Mammary epithelial cell (primary cell): ENCODE measurements at regions of chr19 and their contacts with region 1.

Region 1: GRCh38 chr19:46967578-46968027 is 52.0 kb upstream of the NPAS1 start:
- DNase-seq: no peak
- H3K4me3 ChIP-seq: no peak overlapping the region
- H3K27ac ChIP-seq: no peak overlapping the region
- H3K4me1 ChIP-seq: peaks cover 10% of the 10 kb centered on the region
- H3K27me3 ChIP-seq: no peaks in the 10 kb centered on the region
- CTCF ChIP-seq: no peak

Region 2: GRCh38 chr19:46890423-46891170 is 77.0 kb before region 1 on chr19:
- CTCF ChIA-PET with region 1: no interaction called
- dilution Hi-C with region 1: loop called (anchors 5 kb)
- in situ Hi-C with region 1: no loop called
- intact Hi-C with region 1: no loop called
- DNase-seq: peak; percentile 60
- H3K4me3 ChIP-seq: no peak overlapping the region
- H3K27ac ChIP-seq: no peak overlapping the region
- H3K4me1 ChIP-seq: peaks cover 15% of the 10 kb centered on the region
- H3K27me3 ChIP-seq: no peaks in the 10 kb centered on the region
- CTCF ChIP-seq: no peak

Region 3: DNA sequence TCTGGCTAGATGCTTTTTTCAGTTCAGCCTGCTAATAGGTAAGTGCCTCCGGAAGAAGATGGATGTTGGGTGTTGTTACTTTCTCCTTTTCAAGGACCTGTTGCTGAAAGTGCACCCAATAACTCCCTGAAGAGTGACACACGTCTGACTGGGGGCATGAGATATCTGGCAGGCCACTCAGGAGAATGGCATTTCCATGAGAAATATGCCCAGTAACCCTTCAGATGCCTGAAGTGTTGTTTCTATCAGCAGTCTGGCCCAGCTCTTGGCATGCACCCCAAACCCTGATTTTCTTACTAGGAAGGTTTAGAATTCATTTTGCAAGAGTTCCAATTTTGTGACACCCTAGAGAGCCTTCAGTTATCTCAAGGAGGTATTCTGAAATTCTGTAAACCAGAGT is 35.3 kb before region 1 on chr19:
- CTCF ChIA-PET with region 1: no interaction called
- dilution Hi-C with region 1: loop called (anchors 5 kb)
- in situ Hi-C with region 1: no loop called
- intact Hi-C with region 1: no loop called
- DNase-seq: peak; percentile 43
- H3K4me3 ChIP-seq: no peak overlapping the region
- H3K27ac ChIP-seq: no peak overlapping the region
- H3K4me1 ChIP-seq: peaks cover 34% of the 10 kb centered on the region
- H3K27me3 ChIP-seq: no peaks in the 10 kb centered on the region
- CTCF ChIP-seq: no peak

Region 4: GRCh38 chr19:47047763-47048405 is 80.3 kb after region 1 on chr19:
- CTCF ChIA-PET with region 1: no interaction called
- dilution Hi-C with region 1: loop called (anchors 5 kb)
- in situ Hi-C with region 1: no loop called
- intact Hi-C with region 1: no loop called
- DNase-seq: peak; percentile 83
- H3K4me3 ChIP-seq: peak overlapping the region; percentile 68 to 78 (median 78)
- H3K27ac ChIP-seq: no peak overlapping the region
- H3K4me1 ChIP-seq: no peaks in the 10 kb centered on the region
- H3K27me3 ChIP-seq: no peaks in the 10 kb centered on the region
- CTCF ChIP-seq: no peak